ENCODE measurements at regions of chr20 and their contacts with region 1.

Region 1: GRCh38 chr20:2451939-2452732 is 18.5 kb downstream of the SNRPB start:
- DNase-seq: peak; percentile 54
- ATAC-seq: peak; percentile 75 to 79

Region 2: DNA sequence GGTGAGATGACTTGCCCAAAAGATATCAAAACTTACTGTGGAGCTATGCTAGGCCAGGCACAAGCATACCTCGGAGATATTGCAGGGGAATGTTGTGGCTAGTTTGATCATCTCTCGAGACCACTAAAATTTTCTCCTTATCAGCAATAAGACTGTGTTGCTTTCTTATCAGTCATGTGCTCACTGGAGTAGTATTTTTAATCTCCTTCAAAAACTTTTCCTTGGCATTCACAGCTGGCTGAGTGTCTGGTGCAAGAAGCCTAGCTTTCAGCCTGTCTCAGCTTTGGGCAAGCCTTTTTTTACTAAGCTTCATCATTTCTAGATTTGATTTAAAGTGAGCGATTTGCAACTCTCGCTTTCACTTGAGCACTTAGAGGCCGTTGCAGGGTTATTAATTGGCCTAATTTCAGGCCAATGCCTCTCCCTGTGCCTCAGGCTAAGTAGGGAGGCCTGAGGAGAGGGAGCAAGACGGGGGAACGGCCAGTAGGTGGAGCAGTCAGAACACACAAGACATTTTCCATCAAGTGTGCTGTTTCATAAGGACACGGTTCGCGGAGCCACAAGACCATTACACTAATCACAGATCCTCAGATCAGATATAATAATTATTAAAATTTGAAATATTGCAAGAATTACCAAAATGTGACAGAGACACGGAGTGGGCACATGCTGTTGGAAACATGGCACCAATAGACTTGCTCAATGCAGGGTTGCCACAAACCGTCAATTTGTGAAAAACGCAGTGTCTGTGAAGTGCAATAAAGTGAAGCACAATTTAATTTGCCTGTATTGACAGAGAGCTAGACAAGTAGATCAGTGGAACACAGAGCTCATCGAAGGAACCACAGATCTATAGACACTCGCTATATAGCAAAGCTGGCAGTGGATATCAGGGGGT is 687.8 kb before region 1 on chr20:
- intact Hi-C with region 1: loop called (anchors 5 to 10 kb)
- DNase-seq: peak; percentile 75
- ATAC-seq: peak; percentile 94 to 98

Region 3: GRCh38 chr20:1965520-1966351 is 486.4 kb before region 1 on chr20:
- intact Hi-C with region 1: loop called (anchors 5 to 10 kb)
- DNase-seq: peak; percentile 84
- ATAC-seq: peak; percentile 89 to 90

Region 4: GRCh38 chr20:2206957-2207769 is 245.0 kb before region 1 on chr20:
- intact Hi-C with region 1: loop called in 1 of 2 experiments (anchors 2 kb)
- DNase-seq: peak; percentile 79
- ATAC-seq: peak; percentile 95

Region 5: GRCh38 chr20:2364044-2364443 is 88.1 kb before region 1 on chr20:
- intact Hi-C with region 1: no loop called
- DNase-seq: no peak
- ATAC-seq: no peak